Left lung (tissue), 14 donors: ENCODE measurements at regions of chr11 and their contacts with region 1.

Region 1: GRCh38 chr11:118401151-118401878 is at the start of gene ATP5MG:
- DNase-seq: peak; percentile 91 to 95 (median 92)
- ATAC-seq: peak; percentile 91
- H3K4me3 ChIP-seq: peak within 1 kb of the TSS; percentile 80 to 89
- H3K27ac ChIP-seq: peak within 1 kb of the TSS; percentile 84 to 91
- H3K4me1 ChIP-seq: peaks cover 14 to 42% of the 10 kb centered on the region in 2 donors
- H3K27me3 ChIP-seq: no peaks in the 10 kb centered on the region
- CTCF ChIP-seq: no peak
- polyA plus RNA-seq, gene ATP5MG: 369 to 408 (median 392) TPM

Region 2: DNA sequence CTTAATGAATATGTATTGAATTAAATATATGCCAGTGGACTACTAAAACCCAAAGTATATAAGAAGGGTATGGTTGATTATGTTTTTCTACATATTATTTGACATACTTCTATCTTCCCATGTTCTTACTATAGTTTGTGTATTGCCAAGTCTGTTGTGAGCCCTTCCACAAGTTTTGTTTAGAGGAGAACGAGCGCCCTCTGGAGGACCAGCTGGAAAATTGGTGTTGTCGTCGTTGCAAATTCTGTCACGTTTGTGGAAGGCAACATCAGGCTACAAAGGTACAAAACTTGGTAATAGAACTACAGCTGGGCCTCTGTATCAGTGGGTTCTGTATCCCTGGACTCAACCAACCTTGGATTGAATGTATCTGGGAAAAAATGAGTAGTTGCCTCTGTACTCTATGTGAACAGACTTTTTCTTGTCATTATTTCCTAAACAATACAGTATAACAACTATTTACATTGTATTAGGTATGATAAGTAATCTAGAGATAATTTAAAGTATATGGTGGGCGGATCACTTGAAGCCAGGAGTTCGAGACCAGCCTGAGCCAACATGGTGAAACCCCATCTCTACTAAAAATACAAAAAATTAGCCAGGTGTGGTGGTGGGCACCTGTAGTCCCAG is 87.3 kb after region 1 on chr11:
- intact Hi-C with region 1: loop called (anchors 10 kb)
- DNase-seq: peak in 3 of 4 donors; percentile 47 to 86 (median 69)
- ATAC-seq: peak; percentile 89
- H3K4me3 ChIP-seq: no peak overlapping the region
- H3K27ac ChIP-seq: no peak overlapping the region
- H3K4me1 ChIP-seq: no peaks in the 10 kb centered on the region
- H3K27me3 ChIP-seq: no peaks in the 10 kb centered on the region
- CTCF ChIP-seq: peak; percentile 74 to 76